Dendritic cell treated with granulocyte-macrophage colony-stimulating factor and Interleukin-4, amounts not matched to agents 40 ng/mL and 50 ng/mL, for 4 days (primary cell): ENCODE measurements at regions of chr1 and their contacts with region 1.

Region 1: DNA sequence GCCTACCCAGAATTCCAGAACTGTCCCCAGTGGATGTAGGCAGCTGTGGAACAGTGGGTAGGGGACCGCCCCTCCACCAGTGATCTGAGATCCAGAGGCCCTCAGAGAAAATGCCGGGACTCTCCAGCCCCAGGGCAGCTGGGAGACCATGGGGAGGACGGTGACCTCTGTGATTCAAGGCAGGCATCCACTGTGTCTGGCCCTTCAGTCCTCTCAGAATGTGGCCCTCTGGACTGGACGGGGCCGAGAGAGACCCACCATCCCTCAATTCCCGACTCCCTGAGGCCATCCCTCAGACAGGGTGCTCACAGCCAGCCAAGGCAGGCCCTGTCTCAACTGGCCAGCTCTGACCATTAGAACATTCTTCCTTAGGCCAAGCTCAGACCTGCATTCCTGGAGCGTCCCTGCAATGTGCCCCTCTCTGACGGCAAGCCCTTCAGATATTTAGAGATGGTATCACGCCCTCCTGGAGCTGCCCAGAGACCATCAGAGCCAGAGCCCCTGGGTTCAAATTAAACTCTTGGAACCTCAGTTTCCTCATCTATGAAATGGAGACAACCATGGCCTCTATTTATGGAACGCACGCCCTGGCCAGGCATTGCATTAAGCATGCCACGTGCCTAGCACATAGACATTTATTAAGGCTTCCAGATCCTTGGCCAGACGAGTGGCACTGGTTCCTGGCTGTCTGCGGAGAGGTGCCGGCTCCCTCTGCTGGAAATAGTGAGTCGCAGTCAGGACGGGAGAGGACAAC is 9.6 kb upstream of the EPS8L3 start:
- H3K4me3 Mint-ChIP-seq: no peak overlapping the region
- H3K27ac Mint-ChIP-seq: no peak overlapping the region
- H3K4me1 Mint-ChIP-seq: peaks cover 26% of the 10 kb centered on the region
- H3K27me3 Mint-ChIP-seq: peaks cover 14% of the 10 kb centered on the region

Region 2: GRCh38 chr1:109564194-109564878 is 209.0 kb before region 1 on chr1:
- intact Hi-C with region 1: no loop called
- H3K4me3 Mint-ChIP-seq: no peak overlapping the region
- H3K27ac Mint-ChIP-seq: no peak overlapping the region
- H3K4me1 Mint-ChIP-seq: peaks cover 60% of the 10 kb centered on the region
- H3K27me3 Mint-ChIP-seq: no peaks in the 10 kb centered on the region

Region 3: GRCh38 chr1:109643385-109644230 is 129.7 kb before region 1 on chr1:
- intact Hi-C with region 1: loop called (anchors 1 kb)
- H3K4me3 Mint-ChIP-seq: no peak overlapping the region
- H3K27ac Mint-ChIP-seq: no peak overlapping the region
- H3K4me1 Mint-ChIP-seq: peaks cover 18% of the 10 kb centered on the region
- H3K27me3 Mint-ChIP-seq: peaks cover 5% of the 10 kb centered on the region

Region 4: GRCh38 chr1:109807822-109808680 is 34.7 kb after region 1 on chr1:
- intact Hi-C with region 1: no loop called
- H3K4me3 Mint-ChIP-seq: no peak overlapping the region
- H3K27ac Mint-ChIP-seq: no peak overlapping the region
- H3K4me1 Mint-ChIP-seq: peaks cover 13% of the 10 kb centered on the region
- H3K27me3 Mint-ChIP-seq: peaks cover 15% of the 10 kb centered on the region

Region 5: GRCh38 chr1:109984456-109985275 is 211.3 kb after region 1 on chr1 and contains the start of gene AHCYL1:
- intact Hi-C with region 1: loop called (anchors 1 kb)
- H3K4me3 Mint-ChIP-seq: peak within 1 kb of the TSS; percentile 98
- H3K27ac Mint-ChIP-seq: peak within 1 kb of the TSS; percentile 99
- H3K4me1 Mint-ChIP-seq: peaks cover 35% of the 10 kb centered on the region
- H3K27me3 Mint-ChIP-seq: peaks cover 4% of the 10 kb centered on the region

Region 6: DNA sequence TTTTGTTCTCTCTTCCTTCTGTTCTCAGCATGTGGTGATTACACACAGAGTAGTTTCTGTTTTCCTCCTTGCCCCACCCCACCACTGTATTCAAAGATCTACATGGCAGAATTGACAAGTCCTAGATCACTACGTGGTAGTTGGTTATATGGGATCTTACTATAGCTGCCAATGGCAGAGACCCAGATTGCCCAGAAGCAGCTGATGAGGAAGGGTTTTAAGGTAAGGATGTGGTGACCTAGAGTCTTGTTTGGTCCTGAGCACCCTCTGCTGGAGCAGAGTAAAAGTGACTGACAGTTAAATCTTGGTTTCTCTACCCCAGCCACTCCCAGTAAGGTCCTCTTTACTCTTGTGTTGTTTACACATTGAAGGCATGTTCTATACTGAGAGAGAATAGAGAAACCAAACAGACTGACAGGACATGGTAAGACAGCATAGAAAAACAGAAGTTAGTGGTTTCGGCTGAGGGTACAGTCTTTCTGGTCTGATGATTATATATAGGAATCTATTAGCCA is 238.3 kb after region 1 on chr1:
- intact Hi-C with region 1: loop called (anchors 1 kb)
- H3K4me3 Mint-ChIP-seq: no peak overlapping the region
- H3K27ac Mint-ChIP-seq: no peak overlapping the region
- H3K4me1 Mint-ChIP-seq: peaks cover 15% of the 10 kb centered on the region
- H3K27me3 Mint-ChIP-seq: no peaks in the 10 kb centered on the region